ENCODE measurements at regions of chr3 and their contacts with region 1.

Region 1: DNA sequence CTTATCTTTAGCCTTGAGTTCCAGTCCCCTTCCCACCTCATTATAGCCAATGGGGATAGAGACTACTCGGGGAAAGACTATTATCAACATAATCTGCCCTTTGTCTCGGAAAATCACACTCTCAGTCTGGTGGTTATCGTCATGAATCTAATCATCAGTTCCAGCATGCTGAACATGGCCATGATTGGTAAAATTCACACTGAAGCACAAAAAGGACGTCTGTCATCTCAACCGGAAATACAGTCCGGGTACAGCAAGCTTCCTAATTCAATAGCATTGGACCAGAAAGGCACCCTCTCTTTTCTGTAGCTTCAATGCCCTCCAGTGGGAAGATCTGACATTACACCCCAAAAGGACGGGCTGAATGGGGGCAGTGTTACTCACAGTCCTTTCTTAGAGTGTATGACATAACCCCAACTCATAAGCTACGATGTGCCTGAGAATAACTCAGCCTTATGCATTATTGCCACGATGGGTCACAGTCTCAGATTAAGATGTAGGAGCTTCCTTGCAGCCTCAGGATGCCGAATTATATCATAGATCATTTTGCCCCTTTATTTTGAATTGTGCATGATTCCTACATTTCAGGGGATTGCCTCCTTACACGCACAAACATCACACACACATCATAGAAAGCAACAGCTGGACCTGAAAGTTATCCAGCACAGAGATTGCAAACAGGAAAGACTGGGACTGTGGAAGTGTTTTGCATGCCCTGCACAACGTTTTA is 390.4 kb upstream of the LMCD1 start:
- DNase-seq: peak in 4 of 5 donors; percentile 31 to 52 (median 48)
- ATAC-seq: peak; percentile 78 to 99 (median 90)
- H3K4me3 ChIP-seq: peak overlapping the region in 8 of 12 donors; percentile 18 to 55 (median 36)
- H3K27ac ChIP-seq: no peak overlapping the region
- H3K4me1 ChIP-seq: peaks cover 0 to 14% (median 4%) of the 10 kb centered on the region in 12 donors
- H3K27me3 ChIP-seq: no peaks in the 10 kb centered on the region
- CTCF ChIP-seq: peak; percentile 55 to 88 (median 74)
- POLR2A ChIP-seq: no peak

Region 2: GRCh38 chr3:6799264-6799915 is 1311.8 kb before region 1 on chr3:
- intact Hi-C with region 1: loop called in 1 of 10 experiments (anchors 10 kb)
- DNase-seq: peak in 3 of 5 donors; percentile 21 to 25 (median 23)
- ATAC-seq: peak in 1 of 4 donors; percentile 22
- H3K4me3 ChIP-seq: no peak overlapping the region
- H3K27ac ChIP-seq: no peak overlapping the region
- H3K4me1 ChIP-seq: no peaks in the 10 kb centered on the region
- H3K27me3 ChIP-seq: no peaks in the 10 kb centered on the region
- CTCF ChIP-seq: peak; percentile 52 to 77 (median 67)
- POLR2A ChIP-seq: no peak

Region 3: GRCh38 chr3:7285505-7285904 is 825.7 kb before region 1 on chr3:
- intact Hi-C with region 1: loop called in 1 of 10 experiments (anchors 5 kb)
- DNase-seq: no peak
- ATAC-seq: no peak
- H3K4me3 ChIP-seq: no peak overlapping the region
- H3K27ac ChIP-seq: no peak overlapping the region
- H3K4me1 ChIP-seq: peaks cover 0 to 5% (median 0%) of the 10 kb centered on the region in 12 donors
- H3K27me3 ChIP-seq: no peaks in the 10 kb centered on the region
- CTCF ChIP-seq: peak in 9 of 12 donors; percentile 5 to 44 (median 29)
- POLR2A ChIP-seq: no peak

Region 4: GRCh38 chr3:7800006-7800780 is 311.0 kb before region 1 on chr3:
- intact Hi-C with region 1: loop called in 7 of 10 experiments (anchors 2 to 10 kb)
- DNase-seq: no peak
- ATAC-seq: no peak
- H3K4me3 ChIP-seq: no peak overlapping the region
- H3K27ac ChIP-seq: no peak overlapping the region
- H3K4me1 ChIP-seq: no peaks in the 10 kb centered on the region
- H3K27me3 ChIP-seq: peaks cover 0 to 4% (median 0%) of the 10 kb centered on the region in 9 donors
- CTCF ChIP-seq: peak in 8 of 12 donors; percentile 4 to 42 (median 19)
- POLR2A ChIP-seq: no peak

Region 5: DNA sequence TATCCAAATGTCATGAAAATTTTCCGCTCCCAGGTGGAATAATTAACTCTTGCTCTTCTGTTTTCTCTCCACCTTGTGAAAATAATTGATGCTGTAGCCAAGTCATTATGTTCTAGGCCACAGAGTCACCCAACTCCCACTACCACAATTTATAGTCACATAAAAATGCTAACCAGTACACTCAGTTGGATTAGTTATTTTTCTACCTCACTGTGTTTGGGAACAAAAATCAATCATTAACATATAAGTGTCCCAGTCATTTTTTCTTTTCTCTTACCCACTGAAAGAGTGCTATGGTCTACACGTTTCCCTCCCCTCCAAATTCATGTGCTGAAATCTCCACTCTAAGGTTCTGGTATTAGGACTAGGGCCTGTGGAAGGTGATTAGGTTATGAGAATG is 134.8 kb after region 1 on chr3:
- intact Hi-C with region 1: no loop called
- DNase-seq: no peak
- ATAC-seq: no peak
- H3K4me3 ChIP-seq: no peak overlapping the region
- H3K27ac ChIP-seq: no peak overlapping the region
- H3K4me1 ChIP-seq: no peaks in the 10 kb centered on the region
- H3K27me3 ChIP-seq: no peaks in the 10 kb centered on the region
- CTCF ChIP-seq: no peak
- POLR2A ChIP-seq: no peak

Region 6: GRCh38 chr3:8301728-8302462 is 190.7 kb after region 1 on chr3:
- intact Hi-C with region 1: loop called in 1 of 10 experiments (anchors 5 kb)
- DNase-seq: no peak
- ATAC-seq: no peak
- H3K4me3 ChIP-seq: no peak overlapping the region
- H3K27ac ChIP-seq: no peak overlapping the region
- H3K4me1 ChIP-seq: no peaks in the 10 kb centered on the region
- H3K27me3 ChIP-seq: no peaks in the 10 kb centered on the region
- CTCF ChIP-seq: peak; percentile 51 to 81 (median 68)
- POLR2A ChIP-seq: no peak

Region 7: DNA sequence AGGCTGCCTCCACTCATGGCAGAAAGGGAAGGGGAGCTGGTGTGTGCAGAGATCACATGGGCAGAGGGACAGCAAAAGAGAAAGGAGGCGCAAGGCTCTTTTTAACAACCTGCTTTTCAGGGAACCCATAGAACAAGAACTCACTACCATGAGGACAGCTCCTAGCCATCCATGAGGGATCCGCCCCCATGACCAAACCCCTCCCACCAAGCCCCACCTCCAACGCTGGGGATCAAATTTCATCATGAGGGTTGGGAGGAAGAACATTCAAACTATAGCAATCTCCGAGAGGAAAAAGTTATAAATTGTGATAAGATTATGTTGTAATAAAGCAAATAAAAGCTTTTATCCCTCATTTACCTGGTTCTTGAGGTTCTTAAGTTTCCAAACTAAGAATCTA is 305.7 kb after region 1 on chr3:
- intact Hi-C with region 1: loop called in 2 of 10 experiments (anchors 10 kb)
- DNase-seq: no peak
- ATAC-seq: peak in 2 of 4 donors; percentile 47 to 48
- H3K4me3 ChIP-seq: peak overlapping the region in 2 of 12 donors; percentile 14 to 19
- H3K27ac ChIP-seq: no peak overlapping the region
- H3K4me1 ChIP-seq: peaks cover 0 to 5% (median 0%) of the 10 kb centered on the region in 12 donors
- H3K27me3 ChIP-seq: no peaks in the 10 kb centered on the region
- CTCF ChIP-seq: no peak
- POLR2A ChIP-seq: no peak